ENCODE measurements at regions of chr2 and their contacts with region 1.

Region 1: DNA sequence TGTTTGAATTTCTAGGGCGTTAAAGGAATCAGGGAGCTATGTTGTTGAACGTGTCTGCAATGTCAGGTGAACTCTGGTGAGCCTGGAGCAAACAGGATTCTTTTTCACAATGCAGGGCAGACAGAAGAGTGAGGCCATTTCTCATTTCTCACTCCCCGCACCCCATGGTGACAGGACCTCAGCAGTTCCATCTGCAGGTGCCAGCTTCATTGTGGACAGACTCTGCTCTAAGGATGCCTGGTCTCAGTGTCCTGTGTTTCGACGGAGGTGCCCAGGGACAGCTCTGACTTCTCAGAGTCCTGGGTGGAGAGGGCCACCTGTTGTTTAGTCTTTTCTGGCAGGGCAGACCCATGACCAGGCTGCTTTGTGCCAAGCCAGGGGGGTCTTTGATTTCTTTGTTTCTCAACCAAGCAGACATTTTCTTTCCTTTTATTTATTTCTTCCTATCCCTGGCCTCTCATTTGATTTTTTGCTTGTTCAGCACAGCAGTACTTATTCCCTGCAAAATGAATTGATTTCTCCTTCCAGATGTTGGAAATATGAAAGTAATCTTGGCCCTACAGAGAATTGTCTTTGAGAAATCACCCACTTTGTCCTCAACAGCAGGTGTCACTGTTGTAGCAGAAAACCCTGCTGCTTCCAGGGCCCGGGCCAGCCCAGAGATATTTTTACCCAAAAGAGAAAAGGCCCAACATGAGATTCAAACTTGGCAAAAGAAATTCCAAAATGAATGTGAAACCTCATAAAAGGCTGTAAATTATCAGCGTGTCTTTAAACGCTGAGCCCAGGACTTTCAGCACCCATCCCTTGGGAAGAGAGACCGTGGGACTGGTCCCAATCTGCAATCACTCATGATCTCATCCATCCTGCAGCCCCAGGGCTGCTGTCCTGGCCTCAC is 201.6 kb downstream of the RNF144A start:
- DNase-seq: no peak
- ATAC-seq: peak; percentile 87
- H3K4me3 ChIP-seq: no peak overlapping the region
- H3K27ac ChIP-seq: no peak overlapping the region
- H3K4me1 ChIP-seq: no peaks in the 10 kb centered on the region
- H3K27me3 ChIP-seq: no peaks in the 10 kb centered on the region
- CTCF ChIP-seq: peak; percentile 65
- EP300 ChIP-seq: no peak
- POLR2A ChIP-seq: no peak
- RAD21 ChIP-seq: peak; percentile 10; the same call in 1 of the 2 replicates

Region 2: GRCh38 chr2:7102826-7103225 is 16.0 kb before region 1 on chr2:
- CTCF ChIA-PET with region 1: no interaction called
- POLR2A ChIA-PET with region 1: no interaction called
- in situ Hi-C with region 1: no loop called
- intact Hi-C with region 1: no loop called
- DNase-seq: no peak
- ATAC-seq: no peak
- H3K4me3 ChIP-seq: no peak overlapping the region
- H3K27ac ChIP-seq: no peak overlapping the region
- H3K4me1 ChIP-seq: no peaks in the 10 kb centered on the region; the same call in 1 of the 2 replicates
- H3K27me3 ChIP-seq: no peaks in the 10 kb centered on the region
- CTCF ChIP-seq: no peak
- EP300 ChIP-seq: no peak
- POLR2A ChIP-seq: no peak
- RAD21 ChIP-seq: no peak

Region 3: DNA sequence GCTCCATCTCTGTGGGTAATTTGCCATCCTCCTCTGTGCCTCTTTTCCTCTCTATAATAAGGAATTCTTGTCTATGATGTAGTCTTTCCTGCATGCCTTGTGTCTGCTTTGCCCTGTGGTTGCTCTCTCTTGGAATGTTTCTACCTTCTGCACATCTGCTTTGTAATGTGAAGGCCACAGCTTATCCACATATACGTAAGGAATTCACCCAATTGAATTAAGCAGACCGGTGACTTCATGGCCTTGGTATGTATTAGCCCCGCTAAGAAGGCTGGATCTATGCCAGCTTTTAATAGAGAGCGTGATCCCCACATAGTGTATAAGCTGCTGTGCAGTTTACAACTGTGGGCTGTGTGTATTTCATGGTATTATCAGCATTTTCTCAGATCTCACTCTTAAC is 73.1 kb after region 1 on chr2:
- CTCF ChIA-PET with region 1: no interaction called
- POLR2A ChIA-PET with region 1: no interaction called
- in situ Hi-C with region 1: no loop called
- intact Hi-C with region 1: no loop called
- DNase-seq: peak; percentile 5
- ATAC-seq: no peak
- H3K4me3 ChIP-seq: no peak overlapping the region
- H3K27ac ChIP-seq: no peak overlapping the region
- H3K4me1 ChIP-seq: no peaks in the 10 kb centered on the region
- H3K27me3 ChIP-seq: no peaks in the 10 kb centered on the region
- CTCF ChIP-seq: no peak
- EP300 ChIP-seq: no peak
- POLR2A ChIP-seq: no peak
- RAD21 ChIP-seq: no peak

Region 4: DNA sequence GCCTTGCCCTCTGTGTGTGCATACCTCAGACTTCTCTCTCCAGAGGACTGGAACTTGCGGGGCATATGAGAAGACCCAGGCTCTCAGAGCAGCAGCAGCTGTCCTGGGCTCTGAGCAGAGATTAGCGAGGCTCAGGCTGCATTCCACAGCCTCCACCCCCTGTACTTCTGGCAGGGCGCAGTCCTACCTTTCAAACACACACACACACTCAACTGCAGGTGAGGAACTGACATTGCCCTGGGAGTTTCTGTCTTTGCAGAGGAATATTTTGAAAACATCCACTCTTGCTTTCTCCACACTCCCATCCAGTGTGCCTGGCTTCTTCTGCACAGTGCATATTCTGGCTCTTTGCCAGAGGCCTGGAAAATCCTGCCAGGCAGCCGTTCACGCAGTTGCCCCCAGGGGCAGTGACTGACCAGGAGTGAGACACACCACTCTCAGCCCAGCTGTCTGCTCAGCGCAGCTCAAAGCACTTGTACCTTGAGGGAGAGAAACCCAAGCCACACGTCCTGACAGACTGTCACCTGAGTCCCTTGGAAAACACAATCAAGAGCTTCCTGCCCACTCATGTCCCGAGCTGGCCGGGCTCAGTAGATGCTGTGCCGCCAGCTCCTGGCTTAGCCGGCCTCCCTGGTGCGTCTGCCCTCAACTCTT is 259.2 kb after region 1 on chr2:
- CTCF ChIA-PET with region 1: interaction called, 3 read pairs
- POLR2A ChIA-PET with region 1: no interaction called
- in situ Hi-C with region 1: no loop called
- intact Hi-C with region 1: loop called (anchors 2 kb)
- DNase-seq: no peak
- ATAC-seq: peak; percentile 85
- H3K4me3 ChIP-seq: no peak overlapping the region
- H3K27ac ChIP-seq: no peak overlapping the region
- H3K4me1 ChIP-seq: no peaks in the 10 kb centered on the region
- H3K27me3 ChIP-seq: peaks cover 0 to 3% of the 10 kb centered on the region in 2 experiments; a peak in 1 of 5 replicates
- CTCF ChIP-seq: no peak
- EP300 ChIP-seq: no peak
- POLR2A ChIP-seq: no peak
- RAD21 ChIP-seq: no peak